IMR-90 (cell line): ENCODE measurements at regions of chr15 and their contacts with region 1.

Region 1: GRCh38 chr15:52427804-52428203 is 100.9 kb downstream of the MYO5A start:
- DNase-seq: peak; percentile 86
- ATAC-seq: peak; percentile 94
- H3K4me3 ChIP-seq: no peak overlapping the region
- H3K27ac ChIP-seq: no peak overlapping the region
- H3K4me1 ChIP-seq: no peaks in the 10 kb centered on the region
- H3K27me3 ChIP-seq: no peaks in the 10 kb centered on the region
- CTCF ChIP-seq: no peak
- POLR2A ChIP-seq: no peak
- RAD21 ChIP-seq: no peak

Region 2: DNA sequence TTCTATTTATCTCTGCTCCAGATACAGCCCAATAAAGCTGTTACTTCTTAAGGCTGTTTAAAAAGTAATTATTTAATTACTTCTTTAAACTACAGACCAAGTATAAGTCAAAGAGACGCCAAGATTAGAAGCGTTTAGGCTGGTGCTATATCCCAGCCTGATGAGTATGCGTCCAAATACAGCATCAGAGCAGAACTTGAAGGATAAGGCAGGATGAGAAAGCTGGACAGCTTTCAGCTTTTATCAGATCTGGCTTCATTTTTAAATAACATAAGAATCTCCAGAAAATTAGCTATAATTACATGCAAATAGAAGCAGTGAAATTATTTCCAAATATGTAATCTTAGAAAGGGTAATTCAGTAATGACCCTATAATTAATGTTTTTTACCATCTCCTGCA is 21.9 kb before region 1 on chr15:
- CTCF ChIA-PET with region 1: no interaction called
- POLR2A ChIA-PET with region 1: no interaction called
- dilution Hi-C with region 1: no loop called
- in situ Hi-C with region 1: no loop called
- intact Hi-C with region 1: loop called (anchors 1 kb)
- DNase-seq: no peak
- ATAC-seq: no peak
- H3K4me3 ChIP-seq: no peak overlapping the region
- H3K27ac ChIP-seq: no peak overlapping the region
- H3K4me1 ChIP-seq: 0 out of 2 replicates have a peak, but pooled peaks cover 1% of the 10 kb centered on the region
- H3K27me3 ChIP-seq: no peaks in the 10 kb centered on the region
- CTCF ChIP-seq: no peak
- POLR2A ChIP-seq: no peak
- RAD21 ChIP-seq: no peak

Region 3: DNA sequence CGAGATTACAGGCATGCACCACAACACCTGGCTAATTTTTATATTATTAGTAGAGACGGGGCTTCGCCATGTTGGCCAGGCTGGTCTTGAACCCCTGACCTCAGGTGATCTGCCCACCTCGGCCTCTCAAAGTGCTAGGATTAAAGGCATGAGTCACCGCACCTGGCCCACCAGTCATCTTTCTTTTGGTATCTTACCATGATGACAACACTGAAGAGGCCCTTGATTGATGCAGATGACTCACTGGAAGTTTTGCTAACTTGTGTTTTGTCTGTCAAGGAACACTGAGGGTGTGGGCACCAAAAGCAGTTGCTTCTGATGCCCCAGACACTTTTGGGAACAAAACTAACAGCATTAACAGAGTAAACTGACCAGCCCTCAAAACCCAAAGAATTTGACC is 12.6 kb after region 1 on chr15:
- CTCF ChIA-PET with region 1: no interaction called
- POLR2A ChIA-PET with region 1: no interaction called
- dilution Hi-C with region 1: no loop called
- in situ Hi-C with region 1: no loop called
- intact Hi-C with region 1: no loop called
- DNase-seq: peak; percentile 42
- ATAC-seq: no peak
- H3K4me3 ChIP-seq: no peak overlapping the region
- H3K27ac ChIP-seq: no peak overlapping the region
- H3K4me1 ChIP-seq: peaks cover 10% of the 10 kb centered on the region
- H3K27me3 ChIP-seq: no peaks in the 10 kb centered on the region
- CTCF ChIP-seq: no peak
- POLR2A ChIP-seq: no peak
- RAD21 ChIP-seq: no peak

Region 4: GRCh38 chr15:52503788-52504496 is 76.1 kb after region 1 on chr15:
- CTCF ChIA-PET with region 1: no interaction called
- POLR2A ChIA-PET with region 1: no interaction called
- dilution Hi-C with region 1: no loop called
- in situ Hi-C with region 1: no loop called
- intact Hi-C with region 1: no loop called
- DNase-seq: peak; percentile 86
- ATAC-seq: peak; percentile 62
- H3K4me3 ChIP-seq: no peak overlapping the region
- H3K27ac ChIP-seq: no peak overlapping the region
- H3K4me1 ChIP-seq: peaks cover 2% of the 10 kb centered on the region; the same call in 1 of the 2 replicates
- H3K27me3 ChIP-seq: no peaks in the 10 kb centered on the region
- CTCF ChIP-seq: no peak
- POLR2A ChIP-seq: no peak
- RAD21 ChIP-seq: no peak

Region 5: DNA sequence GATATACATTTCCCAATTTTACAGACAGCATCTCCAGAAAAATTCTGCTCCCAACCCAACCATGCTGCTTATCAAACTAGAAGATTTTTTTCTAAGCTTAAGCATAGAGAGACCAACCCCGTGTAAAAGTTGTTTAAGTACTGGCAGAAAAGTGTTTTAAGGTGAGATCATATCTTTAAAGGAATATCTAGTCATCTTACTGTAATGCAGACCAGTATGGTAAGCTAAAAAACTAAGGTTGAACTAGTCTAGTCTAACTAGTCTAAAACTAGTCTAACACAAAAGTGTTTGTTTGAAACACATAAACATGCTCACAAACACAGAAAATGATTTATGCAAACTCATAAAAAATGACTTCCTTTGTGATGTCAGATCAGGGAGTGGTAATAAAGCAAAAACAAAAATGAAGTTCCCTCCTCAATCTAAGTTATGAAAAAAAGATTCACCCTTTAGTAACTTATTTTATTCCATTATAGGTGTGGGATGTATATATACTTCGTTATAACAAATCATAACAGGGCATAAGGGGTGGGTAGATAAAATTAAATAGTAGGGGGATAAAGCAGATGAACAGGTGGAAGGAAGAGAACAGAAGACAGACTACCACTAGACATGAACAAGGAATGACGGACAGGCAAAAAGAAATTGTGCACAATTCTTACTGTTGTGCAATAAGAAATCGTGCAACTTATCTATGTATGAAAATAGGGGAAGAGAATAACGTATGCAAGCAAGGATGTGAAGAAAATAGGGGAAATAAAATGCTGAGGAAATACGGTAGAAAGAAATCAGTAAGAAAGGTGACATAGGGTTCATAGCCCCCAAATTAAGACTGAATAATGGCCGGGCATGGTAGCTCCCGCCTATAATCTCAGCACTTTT is 90.9 kb after region 1 on chr15:
- CTCF ChIA-PET with region 1: no interaction called
- POLR2A ChIA-PET with region 1: no interaction called
- dilution Hi-C with region 1: no loop called
- in situ Hi-C with region 1: no loop called
- intact Hi-C with region 1: no loop called
- DNase-seq: peak; percentile 63
- ATAC-seq: peak; percentile 30; the same call in 1 of the 2 replicates
- H3K4me3 ChIP-seq: no peak overlapping the region
- H3K27ac ChIP-seq: no peak overlapping the region
- H3K4me1 ChIP-seq: peaks cover 9% of the 10 kb centered on the region
- H3K27me3 ChIP-seq: no peaks in the 10 kb centered on the region
- CTCF ChIP-seq: no peak
- POLR2A ChIP-seq: no peak
- RAD21 ChIP-seq: no peak